B cell (primary cell): ENCODE measurements at regions of chr16 and their contacts with region 1.

Region 1: DNA sequence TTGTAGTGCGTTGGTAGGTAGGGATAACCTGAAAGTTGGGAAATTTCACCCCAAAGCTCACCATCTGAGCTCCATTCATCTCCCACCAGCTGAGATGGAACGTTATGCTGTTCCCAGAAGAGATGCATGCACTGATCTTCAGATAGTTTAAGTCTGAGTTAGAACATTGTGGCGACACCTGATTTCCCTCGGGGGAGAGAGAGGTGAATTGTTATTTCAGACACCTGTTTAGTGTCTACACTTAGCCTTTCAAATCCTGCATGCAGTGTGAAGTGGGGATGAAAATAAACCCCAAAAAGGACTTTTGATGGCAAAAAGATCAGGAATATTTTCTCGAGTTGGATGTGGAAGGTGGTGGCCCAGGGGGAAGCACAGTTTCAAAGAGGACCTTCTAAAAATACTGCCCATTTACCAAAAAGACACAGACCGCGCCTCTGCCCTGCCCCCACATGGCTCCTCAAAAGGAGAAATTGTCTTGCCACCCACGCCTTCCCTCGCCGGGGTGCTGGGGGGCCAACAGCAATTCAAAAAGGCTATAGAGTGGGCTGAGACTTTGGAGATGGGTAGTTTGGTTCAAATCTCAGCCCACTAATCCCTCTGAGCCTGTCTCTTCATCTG is 11.4 kb downstream of the CIITA start:
- DNase-seq: peak; percentile 69
- ATAC-seq: peak; percentile 15
- H3K4me3 ChIP-seq: peak overlapping the region; percentile 41 to 76 (median 47)
- H3K4me3 Mint-ChIP-seq: peak overlapping the region; percentile 81
- H3K27ac ChIP-seq: peak overlapping the region; percentile 74 to 85
- H3K27ac Mint-ChIP-seq: peak overlapping the region; percentile 87
- H3K4me1 ChIP-seq: peaks cover 98 to 100% of the 10 kb centered on the region in 2 donors
- H3K4me1 Mint-ChIP-seq: peaks cover 96% of the 10 kb centered on the region
- H3K27me3 ChIP-seq: no peaks in the 10 kb centered on the region
- H3K27me3 Mint-ChIP-seq: no peaks in the 10 kb centered on the region
- CTCF ChIP-seq: no peak

Region 2: GRCh38 chr16:9534759-9535158 is 1353.7 kb before region 1 on chr16:
- CTCF ChIA-PET with region 1: no interaction called
- POLR2A ChIA-PET with region 1: no interaction called
- intact Hi-C with region 1: no loop called
- DNase-seq: no peak
- ATAC-seq: no peak
- H3K4me3 ChIP-seq: no peak overlapping the region
- H3K4me3 Mint-ChIP-seq: no peak overlapping the region
- H3K27ac ChIP-seq: no peak overlapping the region
- H3K27ac Mint-ChIP-seq: no peak overlapping the region
- H3K4me1 ChIP-seq: no peaks in the 10 kb centered on the region
- H3K4me1 Mint-ChIP-seq: no peaks in the 10 kb centered on the region
- H3K27me3 ChIP-seq: no peaks in the 10 kb centered on the region
- H3K27me3 Mint-ChIP-seq: no peaks in the 10 kb centered on the region
- CTCF ChIP-seq: no peak

Region 3: GRCh38 chr16:10752843-10753523 is 135.4 kb before region 1 on chr16:
- CTCF ChIA-PET with region 1: interaction called, 6 read pairs
- POLR2A ChIA-PET with region 1: interaction called, 19 read pairs
- intact Hi-C with region 1: no loop called
- DNase-seq: peak; percentile 86
- ATAC-seq: peak; percentile 82
- H3K4me3 ChIP-seq: peak overlapping the region in 1 of 5 experiments; percentile 20
- H3K4me3 Mint-ChIP-seq: peak overlapping the region; percentile 54
- H3K27ac ChIP-seq: peak overlapping the region; percentile 75 to 76
- H3K27ac Mint-ChIP-seq: peak overlapping the region; percentile 73
- H3K4me1 ChIP-seq: peaks cover 19 to 41% of the 10 kb centered on the region in 2 donors
- H3K4me1 Mint-ChIP-seq: peaks cover 52% of the 10 kb centered on the region
- H3K27me3 ChIP-seq: no peaks in the 10 kb centered on the region
- H3K27me3 Mint-ChIP-seq: no peaks in the 10 kb centered on the region
- CTCF ChIP-seq: no peak

Region 4: GRCh38 chr16:10906914-10907756 is 18.7 kb after region 1 on chr16:
- CTCF ChIA-PET with region 1: interaction called, 141 read pairs
- POLR2A ChIA-PET with region 1: interaction called, 41 read pairs
- intact Hi-C with region 1: loop called (anchors 1 kb)
- DNase-seq: no peak
- ATAC-seq: no peak
- H3K4me3 ChIP-seq: no peak overlapping the region
- H3K4me3 Mint-ChIP-seq: no peak overlapping the region
- H3K27ac ChIP-seq: peak overlapping the region in 1 of 2 donors; percentile 95
- H3K27ac Mint-ChIP-seq: peak overlapping the region; percentile 67
- H3K4me1 ChIP-seq: peaks cover 43 to 55% of the 10 kb centered on the region in 2 donors
- H3K4me1 Mint-ChIP-seq: peaks cover 70% of the 10 kb centered on the region
- H3K27me3 ChIP-seq: no peaks in the 10 kb centered on the region
- H3K27me3 Mint-ChIP-seq: no peaks in the 10 kb centered on the region
- CTCF ChIP-seq: no peak